Sigmoid colon (tissue), 7 donors: ENCODE measurements at regions of chr10 and their contacts with region 1.

Region 1: GRCh38 chr10:2927958-2928840 is 139.1 kb upstream of the PFKP start:
- DNase-seq: peak; percentile 72
- H3K4me3 ChIP-seq: no peak overlapping the region
- H3K27ac ChIP-seq: no peak overlapping the region
- H3K4me1 ChIP-seq: no peaks in the 10 kb centered on the region
- H3K27me3 ChIP-seq: no peaks in the 10 kb centered on the region
- CTCF ChIP-seq: peak; percentile 15 to 72 (median 64)
- EP300 ChIP-seq: no peak
- POLR2A ChIP-seq: no peak

Region 2: DNA sequence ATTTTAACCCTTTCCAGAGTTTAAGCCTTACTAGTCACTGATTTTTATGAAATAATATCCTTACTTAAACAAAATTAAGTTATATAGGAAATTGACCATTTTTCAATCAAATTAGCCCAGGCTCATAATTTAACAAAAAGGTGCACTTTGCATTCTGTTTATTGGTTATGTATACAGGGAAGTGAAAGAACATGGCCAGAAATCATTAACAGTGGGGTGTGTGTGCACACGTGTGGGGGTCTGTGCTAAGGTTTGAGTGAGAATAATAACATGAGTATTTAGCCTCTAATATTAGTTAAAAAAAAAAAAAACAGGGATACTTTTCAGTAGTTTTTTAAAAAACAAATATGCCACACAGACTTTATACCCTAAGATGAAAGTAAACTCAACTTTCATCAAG is 371.3 kb before region 1 on chr10:
- intact Hi-C with region 1: no loop called
- DNase-seq: no peak
- H3K4me3 ChIP-seq: no peak overlapping the region
- H3K27ac ChIP-seq: no peak overlapping the region
- H3K4me1 ChIP-seq: no peaks in the 10 kb centered on the region
- H3K27me3 ChIP-seq: no peaks in the 10 kb centered on the region
- CTCF ChIP-seq: no peak
- EP300 ChIP-seq: no peak
- POLR2A ChIP-seq: no peak

Region 3: DNA sequence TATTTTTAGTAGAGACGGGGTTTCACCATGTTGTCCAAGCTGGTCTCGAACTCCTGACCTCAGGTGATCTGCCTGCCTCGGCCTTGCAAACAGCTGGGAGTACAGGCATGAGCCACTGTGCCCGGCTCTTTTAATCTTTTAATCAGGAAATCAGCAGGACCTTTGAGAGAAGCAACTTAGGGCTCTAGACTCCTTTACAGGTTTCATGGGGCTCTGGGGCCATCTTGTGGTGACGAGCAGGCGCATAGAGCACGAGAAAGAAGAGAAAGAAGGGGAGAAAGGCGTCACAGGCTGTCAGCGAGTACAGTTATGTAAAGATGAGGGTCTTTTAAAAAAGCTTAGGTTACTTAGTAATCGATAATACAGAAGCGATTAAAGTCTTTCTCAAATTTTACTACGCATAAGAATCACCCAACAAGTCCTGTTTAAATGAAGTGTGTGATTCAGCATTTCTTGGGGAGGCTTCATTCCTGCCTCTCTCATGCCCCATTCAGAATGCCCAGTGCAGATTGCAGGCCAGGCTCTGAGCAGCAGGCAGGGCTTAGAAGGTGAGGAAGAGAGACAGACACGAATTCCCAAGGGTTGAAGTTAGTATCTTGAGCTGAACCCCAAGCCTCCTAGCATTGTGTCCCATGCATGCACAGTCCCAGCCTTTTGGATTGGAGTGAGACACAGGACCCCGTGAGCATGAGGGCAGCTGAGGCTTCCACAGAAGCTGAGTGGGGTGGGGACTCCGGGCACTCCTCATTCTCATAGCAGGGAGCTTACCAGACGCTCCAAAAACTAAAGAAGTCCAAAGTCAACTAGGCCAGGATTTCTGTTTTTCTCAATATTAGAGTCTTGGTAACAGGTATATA is 115.5 kb after region 1 on chr10:
- intact Hi-C with region 1: loop called (anchors 2 kb)
- DNase-seq: peak; percentile 77
- H3K4me3 ChIP-seq: no peak overlapping the region
- H3K27ac ChIP-seq: peak overlapping the region; percentile 58 to 93 (median 72)
- H3K4me1 ChIP-seq: peaks cover 0 to 40% (median 35%) of the 10 kb centered on the region in 4 donors
- H3K27me3 ChIP-seq: no peaks in the 10 kb centered on the region
- CTCF ChIP-seq: peak; percentile 40 to 74 (median 60)
- EP300 ChIP-seq: no peak
- POLR2A ChIP-seq: no peak